ENCODE measurements at regions of chr17 and their contacts with region 1.

Region 1: DNA sequence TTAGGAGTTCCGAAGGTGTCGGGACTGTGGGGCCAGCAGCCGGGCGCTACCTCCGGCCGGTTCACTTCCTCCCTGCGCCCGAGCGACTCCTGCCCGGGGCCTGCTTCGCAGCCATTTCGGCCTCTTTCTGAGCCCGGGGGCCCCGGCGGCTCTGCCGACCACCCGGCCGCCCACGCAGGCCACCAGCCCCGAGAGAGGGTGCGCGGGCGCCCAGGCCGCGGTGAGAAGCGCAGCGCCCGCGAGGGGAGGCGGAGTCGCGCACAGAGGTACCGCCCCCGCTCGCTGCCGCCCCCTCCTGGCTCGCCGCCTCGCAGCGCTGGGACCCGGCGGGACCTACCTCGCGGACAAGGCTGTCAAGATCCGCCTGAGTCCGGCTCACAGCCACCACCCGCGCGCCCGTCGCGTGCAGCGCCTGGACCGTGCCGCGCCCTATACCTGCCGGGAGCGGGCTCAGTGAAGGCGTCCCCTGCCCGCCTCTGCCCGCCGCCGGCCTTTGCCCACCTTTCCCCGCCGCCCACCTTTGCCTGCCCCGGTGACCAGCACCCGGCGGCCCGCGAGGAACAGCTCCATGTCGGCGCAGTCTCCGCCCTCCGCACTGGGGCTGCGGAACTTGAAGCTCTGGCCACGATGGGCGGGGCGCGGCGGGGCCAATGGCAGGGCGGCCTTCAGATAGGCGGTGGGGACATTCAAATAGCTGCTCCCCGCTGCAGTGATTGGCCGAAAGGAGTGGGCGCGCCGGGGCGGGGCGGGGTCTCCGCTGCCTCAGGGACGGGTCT is at the start of gene DCXR:
- DNase-seq: peak; percentile 92 to 93 (median 92)
- H3K4me3 ChIP-seq: peak within 1 kb of the TSS; percentile 37 to 89 (median 70)
- H3K4me3 Mint-ChIP-seq: peak within 1 kb of the TSS; percentile 82 to 92
- H3K27ac ChIP-seq: peak within 1 kb of the TSS; percentile 53 to 80
- H3K27ac Mint-ChIP-seq: peak within 1 kb of the TSS; percentile 83 to 96 (median 93)
- H3K4me1 ChIP-seq: peaks cover 27 to 38% of the 10 kb centered on the region in 2 donors
- H3K4me1 Mint-ChIP-seq: peaks cover 33% of the 10 kb centered on the region
- H3K27me3 ChIP-seq: peaks cover 3 to 5% of the 10 kb centered on the region in 2 donors
- H3K27me3 Mint-ChIP-seq: peaks cover 9 to 12% (median 10%) of the 10 kb centered on the region in 3 donors
- CTCF ChIP-seq: peak; percentile 95
- polyA plus RNA-seq, gene DCXR: 88.8 to 93.1 (median 90.3) TPM

Region 2: DNA sequence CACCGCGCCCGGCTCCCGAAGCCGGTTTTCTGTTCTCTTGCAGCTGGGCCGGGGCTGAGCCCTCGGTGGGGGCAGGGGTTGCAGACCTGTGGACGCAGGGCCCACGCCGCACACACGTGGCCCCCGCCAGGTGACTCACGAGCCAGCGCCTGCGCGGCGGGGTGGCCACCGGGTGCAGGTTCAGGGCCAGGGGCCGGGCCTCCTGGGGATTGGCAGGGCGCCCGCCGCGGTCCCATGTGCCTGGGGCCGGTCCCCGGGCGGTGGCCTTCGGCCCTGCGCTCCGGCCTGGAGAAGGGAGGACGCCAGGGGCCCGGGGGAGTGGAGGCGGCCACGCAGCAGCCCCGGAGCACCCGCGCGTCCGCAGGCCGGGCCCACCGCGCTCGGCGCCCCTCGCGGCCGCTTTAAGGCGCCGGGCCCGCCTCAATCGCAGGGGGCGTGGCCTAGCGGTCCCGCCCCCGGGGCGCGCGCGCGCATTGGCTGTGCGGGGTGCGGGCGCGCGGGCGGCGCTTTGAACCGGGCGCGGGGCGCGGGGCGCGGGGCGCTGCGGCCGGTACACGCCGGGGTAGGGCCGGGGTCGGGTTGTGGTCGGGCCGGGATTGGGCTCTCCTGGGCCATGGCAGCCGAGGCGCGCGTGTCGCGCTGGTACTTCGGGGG is 325.4 kb before region 1 on chr17 and contains the start of gene SLC25A10:
- intact Hi-C with region 1: loop called in 1 of 2 experiments (anchors 5 kb)
- DNase-seq: peak; percentile 59 to 74 (median 72)
- H3K4me3 ChIP-seq: peak within 1 kb of the TSS; percentile 23 to 78 (median 46)
- H3K4me3 Mint-ChIP-seq: peak within 1 kb of the TSS; percentile 80 to 90
- H3K27ac ChIP-seq: no peak within 1 kb of the TSS
- H3K27ac Mint-ChIP-seq: peak within 1 kb of the TSS in 5 of 7 donors; percentile 38 to 81 (median 76)
- H3K4me1 ChIP-seq: peaks cover 26 to 42% of the 10 kb centered on the region in 2 donors
- H3K4me1 Mint-ChIP-seq: peaks cover 29% of the 10 kb centered on the region
- H3K27me3 ChIP-seq: peaks cover 0 to 8% of the 10 kb centered on the region in 2 donors
- H3K27me3 Mint-ChIP-seq: peaks cover 0 to 21% (median 13%) of the 10 kb centered on the region in 3 donors
- CTCF ChIP-seq: no peak
- polyA plus RNA-seq, gene SLC25A10: 1.8 to 2.3 (median 1.9) TPM

Region 3: GRCh38 chr17:82065638-82066303 is 28.5 kb after region 1 on chr17 and contains the start of gene DUS1L:
- intact Hi-C with region 1: no loop called
- DNase-seq: peak; percentile 63 to 74 (median 67)
- H3K4me3 ChIP-seq: peak within 1 kb of the TSS; percentile 72 to 87 (median 75)
- H3K4me3 Mint-ChIP-seq: peak within 1 kb of the TSS; percentile 80 to 81
- H3K27ac ChIP-seq: peak within 1 kb of the TSS; percentile 8 to 79
- H3K27ac Mint-ChIP-seq: peak within 1 kb of the TSS in 6 of 7 donors; percentile 68 to 91 (median 86)
- H3K4me1 ChIP-seq: peaks cover 20 to 29% of the 10 kb centered on the region in 2 donors
- H3K4me1 Mint-ChIP-seq: peaks cover 22% of the 10 kb centered on the region
- H3K27me3 ChIP-seq: no peaks in the 10 kb centered on the region
- H3K27me3 Mint-ChIP-seq: no peaks in the 10 kb centered on the region
- CTCF ChIP-seq: no peak
- polyA plus RNA-seq, gene DUS1L: 23.9 to 175 (median 47.6) TPM

Region 4: GRCh38 chr17:82098072-82098821 is 60.9 kb after region 1 on chr17 and contains the start of gene FASN:
- intact Hi-C with region 1: loop called in 1 of 2 experiments (anchors 10 kb)
- DNase-seq: peak; percentile 84 to 91 (median 86)
- H3K4me3 ChIP-seq: peak within 1 kb of the TSS; percentile 36 to 73 (median 43)
- H3K4me3 Mint-ChIP-seq: peak within 1 kb of the TSS; percentile 64 to 65
- H3K27ac ChIP-seq: peak within 1 kb of the TSS; percentile 73 to 82
- H3K27ac Mint-ChIP-seq: peak within 1 kb of the TSS in 1 of 7 donors; percentile 66
- H3K4me1 ChIP-seq: peaks cover 21 to 37% of the 10 kb centered on the region in 2 donors
- H3K4me1 Mint-ChIP-seq: peaks cover 19% of the 10 kb centered on the region
- H3K27me3 ChIP-seq: no peaks in the 10 kb centered on the region
- H3K27me3 Mint-ChIP-seq: peaks cover 0 to 4% (median 0%) of the 10 kb centered on the region in 3 donors
- CTCF ChIP-seq: peak; percentile 57
- polyA plus RNA-seq, gene FASN: 0.08 to 8.4 (median 0.13) TPM

Region 5: DNA sequence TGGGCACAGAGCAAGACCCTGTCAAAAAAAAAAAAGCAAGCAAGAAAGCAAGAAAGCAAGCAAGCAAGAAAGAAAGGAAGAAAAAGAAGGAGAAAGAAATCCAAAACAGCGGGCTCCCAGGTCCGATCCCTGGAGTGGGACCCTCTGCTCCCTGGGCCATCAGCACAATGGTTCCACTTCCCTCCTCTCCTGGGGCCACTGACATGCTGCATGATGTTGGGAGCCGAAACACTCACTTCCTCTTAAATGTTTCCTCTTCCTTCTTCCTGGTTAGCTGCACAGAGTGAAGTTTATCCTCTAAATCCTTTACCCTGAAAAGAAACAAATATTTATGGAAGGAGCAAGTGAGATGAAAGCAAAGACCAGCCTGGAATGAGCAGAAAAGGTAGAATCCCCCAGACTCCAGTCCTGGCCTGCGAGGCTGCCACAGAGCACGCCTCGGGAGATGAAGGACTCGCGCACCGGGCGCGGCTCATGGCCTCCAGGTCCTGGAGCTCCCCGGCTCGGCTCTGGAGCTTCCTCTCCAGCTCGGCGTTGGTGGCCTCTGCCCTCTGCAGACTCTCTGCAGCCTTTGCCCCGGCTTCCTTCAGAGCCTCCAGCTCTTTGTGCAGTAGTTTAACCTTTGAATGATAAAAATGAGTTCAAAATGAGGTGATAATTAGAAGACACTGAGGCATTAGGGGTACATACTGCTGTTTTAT is 156.4 kb after region 1 on chr17:
- intact Hi-C with region 1: no loop called
- DNase-seq: peak; percentile 58 to 79 (median 77)
- H3K4me3 ChIP-seq: peak overlapping the region; percentile 35 to 82 (median 56)
- H3K4me3 Mint-ChIP-seq: peak overlapping the region; percentile 80 to 91
- H3K27ac ChIP-seq: peak overlapping the region; percentile 60 to 84
- H3K27ac Mint-ChIP-seq: peak overlapping the region; percentile 73 to 94 (median 85)
- H3K4me1 ChIP-seq: peaks cover 17 to 20% of the 10 kb centered on the region in 2 donors
- H3K4me1 Mint-ChIP-seq: peaks cover 17% of the 10 kb centered on the region
- H3K27me3 ChIP-seq: no peaks in the 10 kb centered on the region
- H3K27me3 Mint-ChIP-seq: no peaks in the 10 kb centered on the region
- CTCF ChIP-seq: no peak

Region 6: DNA sequence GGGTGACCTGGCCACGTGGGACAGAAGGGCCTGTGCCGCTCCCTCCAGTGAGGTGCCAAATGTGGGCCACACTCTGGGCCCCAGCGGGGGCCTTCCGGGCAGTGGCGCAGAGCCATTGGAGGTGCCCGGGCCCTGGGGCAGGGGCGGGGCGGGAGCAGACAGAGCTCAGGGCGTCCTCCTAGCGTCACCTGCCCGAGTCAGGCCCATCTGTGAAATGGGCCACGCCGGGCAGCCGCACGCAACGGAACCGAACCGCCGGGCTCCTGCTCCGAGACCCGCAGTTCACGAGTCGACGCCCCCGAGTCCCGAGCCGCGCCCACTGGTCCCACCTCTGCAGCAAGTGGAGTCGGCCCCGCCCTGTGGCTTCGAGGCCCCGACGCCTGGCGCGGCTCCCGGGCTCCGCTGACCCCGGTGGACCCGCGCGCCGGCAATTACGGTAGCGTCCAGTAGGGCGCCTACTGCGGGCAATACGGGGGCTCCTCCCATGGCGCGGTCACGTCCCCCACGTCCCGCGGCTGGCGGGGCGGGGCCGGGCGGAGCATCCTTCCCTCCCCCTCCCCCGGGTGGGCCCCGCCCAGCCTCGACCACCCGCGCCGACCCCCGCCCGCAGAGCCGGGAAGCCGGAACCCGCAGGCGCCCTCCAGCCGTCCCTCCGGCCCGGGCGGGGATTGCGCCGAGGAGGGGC is 193.5 kb after region 1 on chr17:
- intact Hi-C with region 1: loop called in 1 of 2 experiments (anchors 10 kb)
- DNase-seq: peak; percentile 72 to 82 (median 74)
- H3K4me3 ChIP-seq: peak overlapping the region; percentile 90 to 100 (median 100)
- H3K4me3 Mint-ChIP-seq: peak overlapping the region; percentile 97 to 99
- H3K27ac ChIP-seq: peak overlapping the region; percentile 82 to 95
- H3K27ac Mint-ChIP-seq: peak overlapping the region; percentile 43 to 94 (median 89)
- H3K4me1 ChIP-seq: peaks cover 67 to 84% of the 10 kb centered on the region in 2 donors
- H3K4me1 Mint-ChIP-seq: peaks cover 43% of the 10 kb centered on the region
- H3K27me3 ChIP-seq: no peaks in the 10 kb centered on the region
- H3K27me3 Mint-ChIP-seq: no peaks in the 10 kb centered on the region
- CTCF ChIP-seq: peak; percentile 85

Region 7: DNA sequence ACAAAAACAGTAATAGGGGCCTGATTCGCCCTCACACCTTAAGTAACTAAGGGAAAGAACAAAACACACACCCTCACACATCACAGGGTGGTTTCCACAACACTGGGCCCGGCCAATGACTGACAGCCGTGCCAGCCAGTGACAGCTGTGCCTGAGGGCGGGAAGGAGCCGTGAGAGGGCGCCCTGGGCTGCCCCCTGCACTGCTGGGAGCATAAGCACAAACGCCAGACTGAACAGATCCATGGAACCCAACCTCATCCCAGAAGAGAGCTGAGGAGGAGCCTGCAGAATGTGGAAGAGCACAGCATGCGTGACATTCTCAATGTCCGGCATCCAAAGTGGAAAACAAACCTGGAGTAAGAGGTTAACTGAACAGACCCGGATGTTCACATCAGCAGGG is 220.2 kb after region 1 on chr17:
- intact Hi-C with region 1: no loop called
- DNase-seq: peak in 1 of 3 donors; percentile 43
- H3K4me3 ChIP-seq: no peak overlapping the region
- H3K4me3 Mint-ChIP-seq: no peak overlapping the region
- H3K27ac ChIP-seq: peak overlapping the region in 1 of 2 donors; percentile 41
- H3K27ac Mint-ChIP-seq: peak overlapping the region in 4 of 7 donors; percentile 13 to 85 (median 66)
- H3K4me1 ChIP-seq: no peaks in the 10 kb centered on the region
- H3K4me1 Mint-ChIP-seq: peaks cover 8% of the 10 kb centered on the region
- H3K27me3 ChIP-seq: no peaks in the 10 kb centered on the region
- H3K27me3 Mint-ChIP-seq: no peaks in the 10 kb centered on the region
- CTCF ChIP-seq: no peak

Region 8: GRCh38 chr17:82457997-82458864 is 420.9 kb after region 1 on chr17 and contains the start of gene NARF:
- intact Hi-C with region 1: loop called in 1 of 2 experiments (anchors 10 kb)
- DNase-seq: peak; percentile 96 to 97 (median 97)
- H3K4me3 ChIP-seq: peak within 1 kb of the TSS; percentile 78 to 89 (median 86)
- H3K4me3 Mint-ChIP-seq: peak within 1 kb of the TSS; percentile 88 to 94
- H3K27ac ChIP-seq: peak within 1 kb of the TSS; percentile 95 to 99
- H3K27ac Mint-ChIP-seq: peak within 1 kb of the TSS; percentile 97 to 99 (median 99)
- H3K4me1 ChIP-seq: peaks cover 30 to 36% of the 10 kb centered on the region in 2 donors
- H3K4me1 Mint-ChIP-seq: peaks cover 27% of the 10 kb centered on the region
- H3K27me3 ChIP-seq: no peaks in the 10 kb centered on the region
- H3K27me3 Mint-ChIP-seq: peaks cover 0 to 1% (median 0%) of the 10 kb centered on the region in 3 donors
- CTCF ChIP-seq: no peak
- polyA plus RNA-seq, gene NARF: 91.2 to 101 (median 100) TPM

Measured in CD14-positive monocyte (primary cell).